ENCODE measurements at regions of chr4 and their contacts with region 1.

Region 1: GRCh38 chr4:73222466-73223257 is 35.9 kb downstream of the ANKRD17 start:
- DNase-seq: peak; percentile 35 to 91 (median 62)
- ATAC-seq: peak; percentile 94
- H3K4me3 ChIP-seq: peak overlapping the region; percentile 56
- H3K27ac ChIP-seq: peak overlapping the region; percentile 96
- H3K4me1 ChIP-seq: peaks cover 0 to 3% of the 10 kb centered on the region in 2 experiments; a peak in 2 of 5 replicates
- H3K27me3 ChIP-seq: no peaks in the 10 kb centered on the region
- CTCF ChIP-seq: no peak; a peak in 1 of 6 replicates
- EP300 ChIP-seq: peak; percentile 57; the same call in 1 of the 2 replicates
- POLR2A ChIP-seq: peak; percentile 97
- RAD21 ChIP-seq: no peak

Region 2: DNA sequence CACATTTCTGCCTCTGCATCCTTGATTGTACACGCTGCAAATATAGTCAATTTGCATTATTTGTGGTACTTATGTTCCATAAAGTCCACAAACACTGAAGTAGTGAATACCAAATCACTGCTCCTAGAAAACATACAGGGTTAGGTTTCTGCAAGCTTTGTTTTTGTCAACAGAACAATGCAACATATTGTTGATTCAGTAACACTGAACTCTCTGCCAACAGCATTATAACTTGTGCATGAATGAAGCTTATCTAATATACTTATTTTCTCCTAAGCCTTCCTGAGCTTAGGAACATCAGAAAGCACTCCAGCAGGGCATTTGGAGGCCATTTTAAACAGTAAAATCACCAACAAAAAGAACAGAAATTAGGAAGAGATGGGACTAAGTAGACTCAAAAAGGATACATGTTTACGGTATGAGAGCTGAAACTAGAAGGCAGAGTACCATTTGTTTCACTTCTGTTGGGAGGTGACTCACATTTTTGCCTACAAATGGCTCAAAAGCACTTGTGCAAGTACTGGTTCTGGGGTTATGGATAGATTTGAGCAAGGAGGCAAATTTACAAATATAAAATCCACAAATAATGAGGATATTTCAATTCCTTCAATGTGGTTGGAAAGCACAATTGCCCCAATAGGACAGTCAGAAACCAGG is 167.3 kb before region 1 on chr4:
- CTCF ChIA-PET with region 1: no interaction called
- POLR2A ChIA-PET with region 1: no interaction called
- in situ Hi-C with region 1: no loop called
- intact Hi-C with region 1: no loop called
- DNase-seq: no peak
- ATAC-seq: no peak
- H3K4me3 ChIP-seq: no peak overlapping the region
- H3K27ac ChIP-seq: no peak overlapping the region
- H3K4me1 ChIP-seq: no peaks in the 10 kb centered on the region
- H3K27me3 ChIP-seq: no peaks in the 10 kb centered on the region
- CTCF ChIP-seq: no peak
- EP300 ChIP-seq: no peak
- POLR2A ChIP-seq: no peak
- RAD21 ChIP-seq: no peak

Region 3: GRCh38 chr4:73197220-73197619 is 25.4 kb before region 1 on chr4:
- CTCF ChIA-PET with region 1: no interaction called
- POLR2A ChIA-PET with region 1: interaction called, 19 read pairs
- in situ Hi-C with region 1: no loop called
- intact Hi-C with region 1: no loop called
- DNase-seq: no peak
- ATAC-seq: no peak
- H3K4me3 ChIP-seq: no peak overlapping the region
- H3K27ac ChIP-seq: no peak overlapping the region
- H3K4me1 ChIP-seq: no peaks in the 10 kb centered on the region; a peak in 2 of 5 replicates
- H3K27me3 ChIP-seq: no peaks in the 10 kb centered on the region
- CTCF ChIP-seq: no peak
- EP300 ChIP-seq: no peak
- POLR2A ChIP-seq: no peak
- RAD21 ChIP-seq: no peak

Region 4: DNA sequence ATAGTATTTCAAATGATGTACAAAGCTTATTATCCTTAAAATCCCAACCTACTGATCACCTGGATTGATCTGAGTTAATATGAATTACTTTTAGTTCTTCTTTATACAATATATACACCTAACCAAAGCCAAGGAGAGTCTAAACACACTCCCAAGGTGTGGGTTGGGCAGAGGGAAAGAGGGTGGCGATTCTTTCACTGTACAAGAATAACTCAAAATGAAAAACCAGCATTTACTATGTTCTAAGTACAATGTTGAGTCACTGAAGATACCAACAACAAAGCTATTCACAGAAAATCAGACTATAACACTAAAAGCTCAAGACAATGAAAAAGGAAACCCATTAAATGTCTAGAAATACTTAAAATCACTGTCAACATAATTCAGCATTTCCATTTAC is 10.7 kb before region 1 on chr4:
- CTCF ChIA-PET with region 1: no interaction called
- POLR2A ChIA-PET with region 1: interaction called, 10 read pairs
- in situ Hi-C with region 1: no loop called
- intact Hi-C with region 1: no loop called
- DNase-seq: no peak
- ATAC-seq: no peak
- H3K4me3 ChIP-seq: no peak overlapping the region
- H3K27ac ChIP-seq: no peak overlapping the region
- H3K4me1 ChIP-seq: no peaks in the 10 kb centered on the region; a peak in 1 of 5 replicates
- H3K27me3 ChIP-seq: no peaks in the 10 kb centered on the region
- CTCF ChIP-seq: no peak
- EP300 ChIP-seq: no peak
- POLR2A ChIP-seq: no peak
- RAD21 ChIP-seq: no peak

Measured in K562 (cell line).